ENCODE measurements at regions of chr6 and their contacts with region 1.

Region 1: GRCh38 chr6:150250826-150251225 is 108.0 kb downstream of the PPP1R14C start:
- DNase-seq: peak in 1 of 2 experiments; percentile 22
- H3K4me3 ChIP-seq: no peak overlapping the region
- H3K27ac ChIP-seq: no peak overlapping the region
- H3K4me1 ChIP-seq: peaks cover 36% of the 10 kb centered on the region
- H3K27me3 ChIP-seq: no peaks in the 10 kb centered on the region
- CTCF ChIP-seq: no peak

Region 2: GRCh38 chr6:150208611-150209352 is 42.0 kb before region 1 on chr6:
- CTCF ChIA-PET with region 1: no interaction called
- POLR2A ChIA-PET with region 1: no interaction called
- intact Hi-C with region 1: loop called (anchors 5 kb)
- DNase-seq: no peak
- H3K4me3 ChIP-seq: no peak overlapping the region
- H3K27ac ChIP-seq: no peak overlapping the region
- H3K4me1 ChIP-seq: peaks cover 9% of the 10 kb centered on the region
- H3K27me3 ChIP-seq: no peaks in the 10 kb centered on the region
- CTCF ChIP-seq: no peak